Right ventricle myocardium inferior (tissue), 1 donor: ENCODE measurements at regions of chr3 and their contacts with region 1.

Region 1: DNA sequence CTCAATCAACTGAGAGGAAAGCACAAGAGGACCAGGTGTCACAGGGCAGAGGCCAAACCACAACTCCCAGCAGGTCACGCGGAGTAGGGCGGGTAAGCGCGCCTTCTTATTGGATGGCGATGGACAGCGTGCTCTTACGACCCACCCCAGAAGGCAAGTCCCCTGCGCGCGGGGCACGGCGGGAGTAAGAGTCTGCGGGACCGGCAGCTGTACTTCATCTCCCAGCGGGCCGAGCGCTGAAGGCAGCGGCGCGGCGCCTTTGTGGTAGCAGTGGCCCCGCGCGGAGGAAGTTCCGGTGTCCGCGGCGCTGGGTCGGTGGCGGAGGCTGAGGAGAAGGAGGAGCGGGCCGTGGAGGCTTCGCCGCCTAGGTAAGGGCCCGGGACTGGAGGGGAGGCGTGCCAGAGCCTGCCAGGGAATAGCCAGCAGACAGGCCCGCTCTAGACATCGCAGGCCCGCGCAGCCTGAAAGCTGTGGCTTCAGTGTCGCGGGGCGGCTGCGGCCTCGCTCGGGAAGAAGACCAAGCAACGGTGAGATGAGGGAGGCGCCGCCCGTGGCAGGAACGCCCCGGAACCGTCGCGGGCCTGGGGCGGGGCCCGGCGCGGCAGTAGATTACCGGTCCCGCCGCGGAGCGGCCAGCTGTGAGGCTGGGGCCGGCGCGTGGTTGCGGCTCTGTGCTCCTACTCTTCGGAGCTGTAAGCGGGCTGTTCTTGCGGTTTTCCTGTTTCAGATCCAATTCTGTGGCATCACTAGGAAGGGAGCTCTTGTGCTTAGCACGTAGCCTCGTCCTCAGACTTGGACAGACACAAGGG is at the start of gene RBM6:
- DNase-seq: peak; percentile 99
- ATAC-seq: peak; percentile 99
- total RNA-seq, gene RBM6: 44.3 TPM

Region 2: GRCh38 chr3:49656541-49657112 is 283.4 kb before region 1 on chr3:
- intact Hi-C with region 1: no loop called
- DNase-seq: peak; percentile 7
- ATAC-seq: no peak

Region 3: GRCh38 chr3:49929331-49930240 is 10.5 kb before region 1 on chr3 and contains the start of gene MON1A:
- intact Hi-C with region 1: loop called (anchors 1 kb)
- DNase-seq: peak; percentile 98
- ATAC-seq: peak; percentile 99
- total RNA-seq, gene MON1A: 7.7 TPM

Region 4: DNA sequence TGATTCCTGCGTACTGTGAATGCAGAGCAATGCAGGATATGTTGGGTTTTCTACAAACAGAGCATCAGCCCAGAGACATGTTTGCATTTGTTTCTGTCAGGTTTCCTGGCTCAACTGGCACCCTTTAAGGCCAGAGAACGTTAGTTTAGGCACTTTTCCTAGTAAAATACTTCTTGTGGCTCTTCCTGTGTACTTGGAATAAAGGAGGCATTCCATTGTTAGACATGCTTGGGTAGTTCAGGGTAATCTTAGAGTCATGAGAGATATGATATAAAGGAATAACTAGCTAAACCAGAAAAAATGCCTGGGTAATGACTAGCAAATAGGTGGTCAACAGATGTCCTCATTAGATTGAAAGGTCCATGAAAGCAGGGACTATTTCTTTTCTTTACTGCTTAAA is 88.3 kb after region 1 on chr3:
- intact Hi-C with region 1: loop called (anchors 10 kb)
- DNase-seq: no peak
- ATAC-seq: no peak